ENCODE measurements at regions of chr22 and their contacts with region 1.

Region 1: GRCh38 chr22:24230911-24231656 is 13.8 kb downstream of the GGT5 start:
- DNase-seq: peak; percentile 93
- ATAC-seq: peak; percentile 98
- H3K4me3 Mint-ChIP-seq: no peak overlapping the region
- H3K27ac Mint-ChIP-seq: no peak overlapping the region
- H3K4me1 Mint-ChIP-seq: peaks cover 3% of the 10 kb centered on the region
- H3K27me3 Mint-ChIP-seq: no peaks in the 10 kb centered on the region
- CTCF ChIP-seq: peak; percentile 78

Region 2: GRCh38 chr22:24146194-24146616 is 84.9 kb before region 1 on chr22:
- CTCF ChIA-PET with region 1: interaction called, 11 read pairs
- POLR2A ChIA-PET with region 1: interaction called, 3 read pairs
- DNase-seq: peak; percentile 66
- ATAC-seq: peak; percentile 94
- H3K4me3 Mint-ChIP-seq: no peak overlapping the region
- H3K27ac Mint-ChIP-seq: peak overlapping the region; percentile 92
- H3K4me1 Mint-ChIP-seq: peaks cover 27% of the 10 kb centered on the region
- H3K27me3 Mint-ChIP-seq: no peaks in the 10 kb centered on the region
- CTCF ChIP-seq: no peak

Region 3: GRCh38 chr22:24189249-24190158 is 41.6 kb before region 1 on chr22:
- CTCF ChIA-PET with region 1: interaction called, 136 read pairs
- POLR2A ChIA-PET with region 1: no interaction called
- DNase-seq: peak; percentile 86
- ATAC-seq: peak; percentile 97
- H3K4me3 Mint-ChIP-seq: no peak overlapping the region
- H3K27ac Mint-ChIP-seq: no peak overlapping the region
- H3K4me1 Mint-ChIP-seq: peaks cover 3% of the 10 kb centered on the region; the same call in 1 of the 2 replicates
- H3K27me3 Mint-ChIP-seq: no peaks in the 10 kb centered on the region; the same call in 1 of the 2 replicates
- CTCF ChIP-seq: peak; percentile 65; the same call in 1 of the 2 replicates

Region 4: DNA sequence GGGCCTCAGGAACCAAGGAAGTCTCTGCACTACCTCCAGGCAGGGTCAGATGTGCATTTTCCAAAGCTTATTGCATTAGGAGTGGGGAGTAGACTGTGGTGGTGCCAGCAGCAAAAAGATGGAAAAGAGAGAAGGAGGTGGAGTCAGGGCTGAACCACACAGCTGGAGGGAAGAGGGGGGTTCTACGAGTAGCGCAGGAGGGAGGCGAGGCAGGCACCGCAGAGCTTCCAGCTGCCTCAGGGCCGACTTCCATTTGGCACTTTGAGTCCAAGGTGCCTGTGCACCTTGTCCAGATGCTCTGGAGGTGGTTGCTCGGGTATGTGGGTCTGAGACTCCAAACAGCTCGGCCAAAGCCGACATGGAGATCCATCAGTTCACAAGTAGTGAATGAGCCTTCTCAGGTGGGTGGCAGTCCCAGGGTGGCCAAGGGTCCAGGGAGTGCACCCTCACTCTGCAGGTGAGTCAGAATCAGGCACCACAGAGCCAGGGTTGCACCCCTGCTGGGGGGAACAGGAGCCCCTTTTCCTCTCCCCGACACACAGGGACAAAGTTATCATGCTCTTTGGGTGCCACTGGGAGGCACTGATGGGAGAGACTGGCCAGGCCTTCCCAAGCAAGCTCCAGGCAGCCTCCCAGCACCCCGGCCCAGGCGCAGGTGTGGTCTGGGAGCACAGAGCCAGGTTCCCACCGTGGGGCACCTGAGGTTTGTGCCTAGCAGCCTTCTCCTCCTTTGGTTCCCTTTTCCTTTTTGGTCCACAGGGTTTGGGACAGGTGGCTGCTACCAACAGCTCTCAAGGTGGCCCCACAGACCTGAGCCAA is 16.4 kb before region 1 on chr22:
- CTCF ChIA-PET with region 1: interaction called, 35 read pairs
- POLR2A ChIA-PET with region 1: no interaction called
- DNase-seq: no peak
- ATAC-seq: no peak; the same call in none of the 2 replicates
- H3K4me3 Mint-ChIP-seq: no peak overlapping the region
- H3K27ac Mint-ChIP-seq: no peak overlapping the region
- H3K4me1 Mint-ChIP-seq: peaks cover 13% of the 10 kb centered on the region
- H3K27me3 Mint-ChIP-seq: no peaks in the 10 kb centered on the region; the same call in 1 of the 2 replicates
- CTCF ChIP-seq: no peak

Region 5: GRCh38 chr22:24244101-24244787 is 13.2 kb after region 1 on chr22:
- CTCF ChIA-PET with region 1: interaction called, 69 read pairs
- POLR2A ChIA-PET with region 1: interaction called, 3 read pairs
- DNase-seq: no peak
- ATAC-seq: no peak
- H3K4me3 Mint-ChIP-seq: no peak overlapping the region
- H3K27ac Mint-ChIP-seq: no peak overlapping the region
- H3K4me1 Mint-ChIP-seq: peaks cover 18% of the 10 kb centered on the region
- H3K27me3 Mint-ChIP-seq: no peaks in the 10 kb centered on the region
- CTCF ChIP-seq: no peak

Region 6: DNA sequence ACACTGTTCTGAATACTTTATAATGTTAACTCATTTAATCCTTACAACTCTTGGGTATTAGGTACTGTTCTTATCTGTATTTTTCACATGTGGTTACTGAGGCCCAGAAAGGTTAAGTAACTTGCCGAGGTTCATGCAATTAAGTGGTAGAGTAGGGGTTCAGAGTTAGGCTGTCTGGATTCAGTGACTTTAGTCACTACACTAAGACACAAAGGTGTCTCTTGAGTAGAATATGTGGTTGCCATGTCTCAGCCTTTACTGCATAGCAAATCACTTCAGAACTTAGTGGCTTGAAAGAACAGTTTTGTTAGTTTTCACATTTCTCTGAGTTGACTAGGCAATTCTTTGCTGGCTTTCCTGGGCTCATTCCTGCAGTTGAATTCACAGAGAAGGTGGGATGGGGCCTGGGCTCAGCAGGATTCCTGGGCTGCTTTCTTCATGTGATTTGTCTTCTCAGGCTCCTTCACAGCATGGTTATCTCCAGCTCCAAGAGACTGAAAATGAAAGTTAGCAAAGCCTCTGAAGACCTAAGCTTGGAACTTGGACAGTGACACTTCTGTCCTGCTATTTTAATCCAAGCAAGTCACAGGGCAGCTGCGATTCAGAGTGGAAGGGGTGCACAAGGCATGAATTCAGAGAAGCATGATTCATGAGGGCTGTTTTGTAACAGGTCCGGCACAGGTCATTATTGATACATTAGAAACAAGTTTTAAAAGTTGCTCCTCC is 107.8 kb after region 1 on chr22:
- CTCF ChIA-PET with region 1: no interaction called
- POLR2A ChIA-PET with region 1: no interaction called
- DNase-seq: no peak
- ATAC-seq: peak; percentile 60; the same call in 1 of the 2 replicates
- H3K4me3 Mint-ChIP-seq: no peak overlapping the region
- H3K27ac Mint-ChIP-seq: peak overlapping the region; percentile 93
- H3K4me1 Mint-ChIP-seq: peaks cover 47% of the 10 kb centered on the region
- H3K27me3 Mint-ChIP-seq: no peaks in the 10 kb centered on the region
- CTCF ChIP-seq: no peak

Measured in WTC11 (cell line).